Activated B cell treated with CpG ODN at 0.5 μM for 24 hours (primary cell): ENCODE measurements at regions of chr4 and their contacts with region 1.

Region 1: GRCh38 chr4:38902695-38903094 is 35.1 kb downstream of the FAM114A1 start:
- DNase-seq: no peak
- ATAC-seq: peak; percentile 71
- H3K4me3 Mint-ChIP-seq: no peak overlapping the region
- H3K27ac Mint-ChIP-seq: no peak overlapping the region
- H3K4me1 Mint-ChIP-seq: peaks cover 2% of the 10 kb centered on the region
- H3K27me3 Mint-ChIP-seq: no peaks in the 10 kb centered on the region
- CTCF ChIP-seq: peak; percentile 45

Region 2: DNA sequence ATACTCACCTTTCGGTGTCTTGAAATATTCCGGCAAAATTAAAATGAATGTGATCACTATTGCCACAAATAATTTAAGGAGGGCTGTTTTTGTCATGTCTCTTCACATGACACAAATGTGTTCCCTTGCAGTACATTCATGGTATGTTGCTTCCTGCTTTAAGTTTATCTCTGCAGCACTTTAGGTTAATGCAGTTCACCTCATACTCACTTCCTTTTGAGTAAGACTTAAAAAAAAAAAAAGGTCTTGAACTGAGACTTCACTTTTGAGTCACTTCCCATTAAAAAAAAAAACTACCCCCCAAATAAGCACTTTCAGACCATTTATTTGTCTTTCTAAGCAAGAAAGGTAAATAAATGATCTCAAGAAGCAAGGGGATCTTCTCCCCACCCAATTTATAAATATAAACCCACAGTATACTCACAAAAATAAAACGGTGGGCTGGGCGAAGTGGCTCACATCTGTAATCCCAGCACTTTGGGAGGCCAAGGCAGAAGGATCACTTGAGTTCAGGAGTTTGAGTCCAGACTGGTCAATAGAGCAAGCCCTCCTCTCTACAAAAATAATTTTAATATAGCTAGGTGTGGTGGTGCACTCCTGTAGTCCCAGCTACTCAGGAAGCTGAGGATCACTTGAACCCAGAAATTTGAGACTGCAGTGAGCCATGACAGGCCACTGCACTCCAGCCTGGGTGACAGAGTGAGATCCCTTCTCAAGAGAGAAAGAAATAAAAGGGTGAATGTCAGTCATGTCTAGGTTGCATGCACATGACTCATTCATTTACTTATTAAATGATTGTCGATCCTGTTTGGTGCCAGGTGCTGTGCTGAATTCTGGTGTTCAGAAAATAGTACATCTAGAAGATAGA is 129.8 kb after region 1 on chr4 and contains the start of gene TMEM156:
- CTCF ChIA-PET with region 1: no interaction called
- POLR2A ChIA-PET with region 1: interaction called, 10 read pairs
- intact Hi-C with region 1: no loop called
- DNase-seq: no peak
- ATAC-seq: peak; percentile 69
- H3K4me3 Mint-ChIP-seq: peak within 1 kb of the TSS; percentile 83
- H3K27ac Mint-ChIP-seq: peak within 1 kb of the TSS; percentile 93
- H3K4me1 Mint-ChIP-seq: peaks cover 64% of the 10 kb centered on the region
- H3K27me3 Mint-ChIP-seq: no peaks in the 10 kb centered on the region
- CTCF ChIP-seq: no peak
- total RNA-seq, gene TMEM156: 26.0 and 29.5 TPM in 2 replicates

Region 3: DNA sequence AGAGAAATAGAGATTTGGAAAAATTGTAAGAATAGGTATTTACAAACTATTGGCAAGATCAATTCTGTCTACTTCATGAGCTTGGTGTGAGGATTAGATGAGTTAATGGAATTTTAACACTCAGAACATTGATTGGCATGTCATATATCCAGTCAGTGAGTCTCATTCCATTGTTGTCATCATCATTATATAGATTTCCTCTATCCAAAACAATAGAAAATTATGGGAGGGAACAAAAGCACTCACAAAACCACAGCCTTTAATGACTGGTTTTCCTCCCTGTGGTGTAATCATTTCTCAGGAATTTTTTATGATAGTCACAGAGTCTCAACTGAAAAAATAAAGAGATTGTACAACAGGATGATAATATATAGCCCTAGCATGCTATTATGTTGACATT is 180.5 kb after region 1 on chr4:
- CTCF ChIA-PET with region 1: interaction called, 4 read pairs
- POLR2A ChIA-PET with region 1: no interaction called
- intact Hi-C with region 1: loop called (anchors 5 kb)
- DNase-seq: no peak
- ATAC-seq: no peak
- H3K4me3 Mint-ChIP-seq: no peak overlapping the region
- H3K27ac Mint-ChIP-seq: no peak overlapping the region
- H3K4me1 Mint-ChIP-seq: no peaks in the 10 kb centered on the region
- H3K27me3 Mint-ChIP-seq: no peaks in the 10 kb centered on the region
- CTCF ChIP-seq: no peak

Region 4: GRCh38 chr4:39134683-39135319 is 232.1 kb after region 1 on chr4:
- CTCF ChIA-PET with region 1: interaction called, 147 read pairs
- POLR2A ChIA-PET with region 1: interaction called, 7 read pairs
- intact Hi-C with region 1: loop called (anchors 1 kb)
- DNase-seq: no peak
- ATAC-seq: no peak
- H3K4me3 Mint-ChIP-seq: no peak overlapping the region
- H3K27ac Mint-ChIP-seq: peak overlapping the region; percentile 4
- H3K4me1 Mint-ChIP-seq: peaks cover 12% of the 10 kb centered on the region
- H3K27me3 Mint-ChIP-seq: no peaks in the 10 kb centered on the region
- CTCF ChIP-seq: no peak

Region 5: GRCh38 chr4:39285111-39285795 is 382.6 kb after region 1 on chr4:
- CTCF ChIA-PET with region 1: no interaction called
- POLR2A ChIA-PET with region 1: no interaction called
- intact Hi-C with region 1: loop called (anchors 10 kb)
- DNase-seq: no peak
- ATAC-seq: no peak
- H3K4me3 Mint-ChIP-seq: no peak overlapping the region
- H3K27ac Mint-ChIP-seq: no peak overlapping the region
- H3K4me1 Mint-ChIP-seq: no peaks in the 10 kb centered on the region
- H3K27me3 Mint-ChIP-seq: no peaks in the 10 kb centered on the region
- CTCF ChIP-seq: no peak

Region 6: GRCh38 chr4:39410415-39410814 is 507.7 kb after region 1 on chr4:
- CTCF ChIA-PET with region 1: interaction called, 4 read pairs
- POLR2A ChIA-PET with region 1: no interaction called
- intact Hi-C with region 1: loop called (anchors 10 kb)
- DNase-seq: no peak
- ATAC-seq: no peak
- H3K4me3 Mint-ChIP-seq: no peak overlapping the region
- H3K27ac Mint-ChIP-seq: no peak overlapping the region
- H3K4me1 Mint-ChIP-seq: no peaks in the 10 kb centered on the region
- H3K27me3 Mint-ChIP-seq: peaks cover 3% of the 10 kb centered on the region
- CTCF ChIP-seq: no peak

Region 7: GRCh38 chr4:39446751-39447573 is 544.3 kb after region 1 on chr4:
- CTCF ChIA-PET with region 1: no interaction called
- POLR2A ChIA-PET with region 1: no interaction called
- intact Hi-C with region 1: loop called (anchors 5 kb)
- DNase-seq: peak; percentile 80
- ATAC-seq: peak; percentile 94
- H3K4me3 Mint-ChIP-seq: peak overlapping the region; percentile 83
- H3K27ac Mint-ChIP-seq: peak overlapping the region; percentile 90
- H3K4me1 Mint-ChIP-seq: peaks cover 27% of the 10 kb centered on the region
- H3K27me3 Mint-ChIP-seq: no peaks in the 10 kb centered on the region
- CTCF ChIP-seq: no peak